Activated CD4-positive, alpha-beta memory T cell treated with anti-CD3 and anti-CD28 coated beads, Interleukin-2, amount 10 ng/mL, durations not matched to agents 7 days and 5 days (primary cell): ENCODE measurements at regions of chr20 and their contacts with region 1.

Region 1: DNA sequence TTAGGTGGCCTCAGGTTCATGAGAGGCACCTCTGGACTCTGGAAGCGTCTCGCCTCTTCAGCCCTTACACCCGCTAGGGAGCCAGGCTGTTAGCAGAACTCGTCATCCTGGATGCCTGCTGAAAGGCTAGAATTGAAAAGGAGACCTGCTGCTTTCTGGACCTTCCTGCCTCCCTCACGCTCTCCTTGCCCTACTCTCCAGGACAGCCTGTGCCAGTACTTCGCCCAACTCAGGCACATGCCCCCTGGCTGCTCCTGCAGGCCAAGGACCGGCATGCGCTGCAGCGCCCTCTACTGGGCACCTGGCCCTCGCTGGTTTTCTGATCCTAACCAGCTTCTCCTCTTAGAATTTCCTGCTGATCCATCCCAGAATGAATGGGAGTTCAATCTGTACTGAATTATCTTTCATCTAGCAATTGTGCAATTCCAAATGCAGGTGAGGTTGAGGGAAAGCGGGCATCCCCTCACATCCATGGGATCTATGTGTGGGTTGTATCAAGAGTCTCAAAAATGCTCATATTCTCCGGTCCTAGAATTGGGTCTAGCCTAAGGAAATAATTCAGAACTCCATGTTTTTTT is 77.9 kb downstream of the PTPN1 start:
- DNase-seq: peak; percentile 76
- H3K4me3 Mint-ChIP-seq: no peak overlapping the region
- H3K27ac Mint-ChIP-seq: peak overlapping the region; percentile 45
- H3K4me1 Mint-ChIP-seq: peaks cover 3% of the 10 kb centered on the region
- H3K27me3 Mint-ChIP-seq: no peaks in the 10 kb centered on the region

Region 2: DNA sequence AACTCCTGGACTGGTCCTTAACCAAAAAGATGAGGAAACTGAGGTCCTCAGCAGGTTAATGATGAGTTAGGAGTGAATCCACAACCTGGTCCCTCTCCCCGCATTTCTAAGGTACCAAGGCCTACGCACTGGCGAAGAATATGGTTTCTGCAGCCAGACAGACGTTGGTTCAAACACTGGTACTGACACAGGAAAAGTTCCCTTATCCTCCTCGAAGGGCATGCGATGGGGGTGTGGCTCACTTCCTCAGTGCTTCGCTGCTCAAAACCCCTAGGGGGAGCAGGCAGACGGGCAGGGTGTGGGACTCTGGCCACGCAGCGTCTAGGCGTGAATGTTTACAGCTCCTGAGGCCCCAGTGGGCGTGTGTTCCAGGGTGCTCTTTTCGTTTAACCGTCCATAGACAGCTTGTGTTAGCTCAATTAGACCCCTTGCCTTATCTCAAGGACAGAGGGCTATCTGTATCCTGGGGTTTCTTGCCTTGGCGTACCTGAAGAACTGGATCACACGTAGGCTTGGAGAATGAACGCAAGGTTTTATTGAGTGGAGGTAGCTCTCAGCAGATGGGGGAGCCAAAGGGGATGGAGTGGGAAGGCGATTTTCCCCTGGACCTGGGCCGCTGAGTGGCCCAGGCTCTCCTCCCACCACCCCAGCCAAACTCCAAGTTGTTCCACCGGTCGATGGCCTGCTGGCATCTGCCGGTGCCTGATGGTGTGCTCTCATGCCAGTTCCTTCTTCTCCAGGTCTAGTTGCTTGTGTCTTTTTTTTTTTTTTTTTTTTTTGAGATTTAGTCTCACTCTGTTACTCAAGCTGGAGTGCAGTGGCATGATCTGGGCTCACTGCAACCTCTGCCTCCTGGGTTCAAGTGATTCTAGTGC is 109.7 kb before region 1 on chr20:
- CTCF ChIA-PET with region 1: interaction called, 11 read pairs
- POLR2A ChIA-PET with region 1: interaction called, 3 read pairs
- DNase-seq: peak; percentile 83
- H3K4me3 Mint-ChIP-seq: no peak overlapping the region
- H3K27ac Mint-ChIP-seq: no peak overlapping the region
- H3K4me1 Mint-ChIP-seq: peaks cover 60% of the 10 kb centered on the region
- H3K27me3 Mint-ChIP-seq: no peaks in the 10 kb centered on the region

Region 3: GRCh38 chr20:50484276-50484976 is 103.7 kb before region 1 on chr20:
- CTCF ChIA-PET with region 1: interaction called, 11 read pairs
- POLR2A ChIA-PET with region 1: interaction called, 3 read pairs
- DNase-seq: no peak
- H3K4me3 Mint-ChIP-seq: peak overlapping the region; percentile 80
- H3K27ac Mint-ChIP-seq: peak overlapping the region; percentile 88
- H3K4me1 Mint-ChIP-seq: peaks cover 51% of the 10 kb centered on the region
- H3K27me3 Mint-ChIP-seq: no peaks in the 10 kb centered on the region

Region 4: GRCh38 chr20:50663095-50663850 is 75.2 kb after region 1 on chr20:
- CTCF ChIA-PET with region 1: no interaction called
- POLR2A ChIA-PET with region 1: no interaction called
- DNase-seq: no peak
- H3K4me3 Mint-ChIP-seq: no peak overlapping the region
- H3K27ac Mint-ChIP-seq: no peak overlapping the region
- H3K4me1 Mint-ChIP-seq: no peaks in the 10 kb centered on the region
- H3K27me3 Mint-ChIP-seq: peaks cover 9% of the 10 kb centered on the region

Region 5: GRCh38 chr20:50868509-50869495 is 280.7 kb after region 1 on chr20:
- CTCF ChIA-PET with region 1: no interaction called
- POLR2A ChIA-PET with region 1: no interaction called
- DNase-seq: no peak
- H3K4me3 Mint-ChIP-seq: no peak overlapping the region
- H3K27ac Mint-ChIP-seq: no peak overlapping the region
- H3K4me1 Mint-ChIP-seq: no peaks in the 10 kb centered on the region
- H3K27me3 Mint-ChIP-seq: no peaks in the 10 kb centered on the region